ENCODE measurements at regions of chr4 and their contacts with region 1.

Region 1: DNA sequence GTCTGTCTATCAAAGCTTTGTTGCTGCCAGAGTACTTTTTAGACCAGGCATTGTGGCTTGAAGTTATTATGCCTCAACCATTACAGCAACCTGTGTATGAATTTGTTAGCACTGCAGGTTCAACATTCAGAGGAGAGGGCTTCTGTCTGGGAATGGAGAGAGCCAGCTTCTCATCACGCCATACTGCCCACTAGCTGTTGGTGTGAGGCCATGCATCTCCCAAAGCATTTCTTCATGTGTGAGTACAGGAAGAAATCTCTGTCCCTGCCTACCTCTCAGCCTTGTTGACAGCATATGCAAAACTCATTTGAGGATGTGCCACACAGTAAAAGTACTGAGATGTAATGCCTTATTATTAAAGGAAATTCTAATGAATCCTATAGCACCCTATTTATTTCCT is 76.9 kb upstream of the PPARGC1A start:
- DNase-seq: no peak
- H3K4me3 ChIP-seq: no peak overlapping the region
- H3K27ac ChIP-seq: no peak overlapping the region
- H3K4me1 ChIP-seq: peaks cover 0 to 2% (median 0%) of the 10 kb centered on the region in 4 experiments; a peak in 2 of 7 replicates
- H3K27me3 ChIP-seq: no peaks in the 10 kb centered on the region; a peak in 1 of 7 replicates
- CTCF ChIP-seq: peak; percentile 57 to 90 (median 80)
- EP300 ChIP-seq: no peak
- POLR2A ChIP-seq: no peak
- RAD21 ChIP-seq: peak; percentile 72 to 77

Region 2: DNA sequence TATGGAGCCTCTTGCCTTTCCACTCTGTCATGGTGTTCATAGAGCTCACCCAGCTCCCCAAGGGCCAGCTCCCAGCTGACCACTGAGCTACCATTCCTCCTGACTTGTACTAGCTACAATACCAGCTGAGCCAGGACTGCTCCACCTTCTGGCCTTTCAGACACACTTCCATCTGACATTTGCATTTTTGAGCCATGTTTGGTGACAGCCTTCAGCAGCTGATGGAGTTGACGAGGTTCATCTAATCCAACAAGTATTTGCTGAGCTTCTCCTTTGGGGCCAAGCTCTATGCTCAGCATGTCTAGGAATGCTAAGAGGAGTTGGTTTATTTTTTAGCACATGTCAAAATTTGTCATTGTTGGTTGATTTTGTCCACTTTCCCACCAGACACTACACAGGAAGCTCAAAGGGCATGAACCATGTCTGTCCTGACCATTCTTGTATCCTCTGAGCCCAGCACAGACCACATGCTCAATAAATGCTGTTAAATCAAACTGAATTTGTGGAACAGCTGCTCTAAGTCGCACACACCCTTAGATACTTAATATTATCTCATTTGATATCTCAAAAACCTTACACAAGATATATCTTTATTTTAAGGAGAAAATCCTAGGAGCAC is 65.8 kb after region 1 on chr4:
- CTCF ChIA-PET with region 1: interaction called, 12 read pairs
- POLR2A ChIA-PET with region 1: no interaction called
- DNase-seq: no peak
- H3K4me3 ChIP-seq: no peak overlapping the region
- H3K27ac ChIP-seq: no peak overlapping the region
- H3K4me1 ChIP-seq: peaks cover 0 to 3% (median 1%) of the 10 kb centered on the region in 4 experiments; a peak in 2 of 7 replicates
- H3K27me3 ChIP-seq: peaks cover 0 to 1% (median 0%) of the 10 kb centered on the region in 4 experiments; a peak in 1 of 7 replicates
- CTCF ChIP-seq: peak; percentile 12 to 62 (median 53)
- EP300 ChIP-seq: no peak
- POLR2A ChIP-seq: no peak
- RAD21 ChIP-seq: peak; percentile 55 to 73

Region 3: GRCh38 chr4:24076811-24077210 is 110.1 kb after region 1 on chr4:
- CTCF ChIA-PET with region 1: no interaction called
- POLR2A ChIA-PET with region 1: no interaction called
- DNase-seq: no peak
- H3K4me3 ChIP-seq: no peak overlapping the region
- H3K27ac ChIP-seq: no peak overlapping the region
- H3K4me1 ChIP-seq: no peaks in the 10 kb centered on the region
- H3K27me3 ChIP-seq: no peaks in the 10 kb centered on the region; a peak in 1 of 7 replicates
- CTCF ChIP-seq: no peak
- EP300 ChIP-seq: no peak
- POLR2A ChIP-seq: no peak
- RAD21 ChIP-seq: no peak